ENCODE measurements at regions of chr5 and their contacts with region 1.

Region 1: DNA sequence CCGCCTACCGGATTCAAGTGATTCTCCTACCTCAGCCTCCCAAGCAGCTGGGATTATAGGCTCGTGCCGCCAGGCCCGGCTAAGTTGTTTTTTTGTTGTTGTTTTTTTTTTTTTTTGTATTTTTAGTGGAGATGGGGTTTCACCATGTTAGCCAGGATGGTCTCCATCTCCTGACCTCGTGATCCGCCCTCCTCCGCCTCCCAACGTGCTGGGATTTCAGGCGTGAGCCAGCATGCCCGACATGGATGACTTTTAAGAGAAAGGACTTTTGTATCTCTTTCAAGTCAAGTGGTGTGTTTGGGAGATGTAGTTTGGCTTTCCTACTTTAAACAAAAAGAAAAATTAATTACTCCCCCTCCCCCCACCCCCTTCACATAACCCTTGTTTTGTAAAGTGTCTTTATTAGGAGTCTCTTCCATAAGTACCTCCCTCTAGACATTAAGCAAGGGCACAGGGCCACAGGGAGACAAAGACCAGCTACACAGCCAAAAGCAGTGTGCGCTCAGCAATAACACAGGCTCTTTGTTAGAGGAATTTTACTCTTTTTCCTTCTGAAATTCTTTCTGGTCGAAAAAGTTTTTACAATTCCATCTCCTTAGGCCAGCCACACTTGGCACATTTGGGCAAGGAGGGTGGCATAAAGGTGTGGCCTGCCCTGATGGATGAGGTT is 31.2 kb downstream of the JAKMIP2 start:
- DNase-seq: peak; percentile 85
- H3K4me3 ChIP-seq: no peak overlapping the region
- H3K27ac ChIP-seq: peak overlapping the region in 3 of 4 donors; percentile 64 to 81 (median 77)
- H3K4me1 ChIP-seq: peaks cover 0 to 23% (median 19%) of the 10 kb centered on the region in 4 donors
- H3K27me3 ChIP-seq: no peaks in the 10 kb centered on the region
- CTCF ChIP-seq: no peak
- EP300 ChIP-seq: peak in 1 of 4 donors; percentile 41
- POLR2A ChIP-seq: no peak

Region 2: GRCh38 chr5:147669169-147669869 is 82.0 kb before region 1 on chr5:
- intact Hi-C with region 1: loop called (anchors 5 kb)
- DNase-seq: peak; percentile 75
- H3K4me3 ChIP-seq: no peak overlapping the region
- H3K27ac ChIP-seq: peak overlapping the region in 3 of 4 donors; percentile 53 to 74 (median 64)
- H3K4me1 ChIP-seq: peaks cover 0 to 20% (median 12%) of the 10 kb centered on the region in 4 donors
- H3K27me3 ChIP-seq: no peaks in the 10 kb centered on the region
- CTCF ChIP-seq: no peak
- EP300 ChIP-seq: no peak
- POLR2A ChIP-seq: no peak

Region 3: DNA sequence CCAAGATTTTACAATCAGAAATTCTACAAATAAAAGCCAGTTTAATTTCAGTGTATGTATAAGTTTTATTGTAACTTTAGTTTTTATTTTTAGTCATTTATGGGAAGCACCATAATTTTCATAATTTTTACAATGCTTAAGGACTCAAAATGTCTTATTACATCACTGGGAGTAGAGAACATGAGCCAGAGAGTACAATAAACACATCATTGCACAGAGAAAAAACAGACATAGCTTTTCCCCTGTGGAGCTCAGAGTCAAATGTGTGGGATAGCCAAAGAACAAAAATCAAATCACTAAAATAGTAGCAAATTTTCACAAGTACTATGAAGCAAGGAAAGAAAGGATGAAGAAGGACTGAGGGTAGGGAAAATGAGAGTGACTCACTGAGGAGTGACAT is 36.7 kb after region 1 on chr5:
- intact Hi-C with region 1: loop called (anchors 5 kb)
- DNase-seq: no peak
- H3K4me3 ChIP-seq: no peak overlapping the region
- H3K27ac ChIP-seq: peak overlapping the region in 3 of 4 donors; percentile 67 to 71 (median 67)
- H3K4me1 ChIP-seq: peaks cover 2 to 30% (median 23%) of the 10 kb centered on the region in 4 donors
- H3K27me3 ChIP-seq: no peaks in the 10 kb centered on the region
- CTCF ChIP-seq: no peak
- EP300 ChIP-seq: peak; percentile 16 to 78 (median 38)
- POLR2A ChIP-seq: no peak

Region 4: GRCh38 chr5:147892821-147893232 is 141.5 kb after region 1 on chr5:
- intact Hi-C with region 1: no loop called
- DNase-seq: no peak
- H3K4me3 ChIP-seq: no peak overlapping the region
- H3K27ac ChIP-seq: no peak overlapping the region
- H3K4me1 ChIP-seq: no peaks in the 10 kb centered on the region
- H3K27me3 ChIP-seq: no peaks in the 10 kb centered on the region
- CTCF ChIP-seq: no peak
- EP300 ChIP-seq: no peak
- POLR2A ChIP-seq: no peak